RWPE1 (cell line): ENCODE measurements at regions of chr19 and their contacts with region 1.

Region 1: GRCh38 chr19:6125571-6125989 is 9.9 kb upstream of the ACSBG2 start:
- DNase-seq: peak; percentile 68
- H3K27ac ChIP-seq: no peak overlapping the region
- CTCF ChIP-seq: peak; percentile 93

Region 2: DNA sequence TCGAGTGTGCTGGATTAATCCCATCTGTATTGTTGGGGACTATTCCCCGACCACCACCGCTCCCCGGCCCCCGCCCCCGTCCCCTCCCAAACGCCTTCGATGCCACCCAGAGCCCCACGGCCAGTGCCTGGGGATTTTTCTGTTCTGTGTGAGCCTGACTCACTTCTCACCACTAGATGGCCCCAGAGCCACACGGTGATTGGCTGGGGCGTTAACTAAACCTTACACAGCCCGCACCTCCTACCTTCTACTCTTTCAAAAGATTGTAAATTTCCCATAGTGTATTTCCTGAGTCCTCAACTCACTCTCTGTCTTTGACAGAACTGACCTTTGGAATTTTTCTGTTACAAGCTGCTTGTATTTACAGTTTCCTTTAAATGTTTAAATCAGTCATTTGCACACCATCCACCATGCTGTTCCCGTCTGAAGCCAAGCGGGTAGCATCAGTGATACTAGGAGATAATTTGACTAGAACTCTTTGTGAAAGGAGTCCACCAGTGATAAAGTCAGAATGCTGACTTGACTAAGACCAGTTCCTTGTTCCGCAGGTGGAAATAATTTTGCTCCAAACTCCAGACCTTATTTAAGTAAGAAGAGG is 76.7 kb before region 1 on chr19:
- CTCF ChIA-PET with region 1: interaction called, 39 read pairs
- POLR2A ChIA-PET with region 1: no interaction called
- DNase-seq: peak; percentile 83
- H3K27ac ChIP-seq: peak overlapping the region; percentile 55
- CTCF ChIP-seq: peak; percentile 91

Region 3: GRCh38 chr19:6056801-6057650 is 68.6 kb before region 1 on chr19:
- CTCF ChIA-PET with region 1: interaction called, 15 read pairs
- POLR2A ChIA-PET with region 1: no interaction called
- DNase-seq: peak; percentile 97
- H3K27ac ChIP-seq: peak overlapping the region; percentile 100
- CTCF ChIP-seq: no peak

Region 4: GRCh38 chr19:6202636-6203035 is 77.1 kb after region 1 on chr19:
- CTCF ChIA-PET with region 1: no interaction called
- POLR2A ChIA-PET with region 1: interaction called, 12 read pairs
- DNase-seq: no peak
- H3K27ac ChIP-seq: no peak overlapping the region
- CTCF ChIP-seq: no peak